AG04450 (cell line): ENCODE measurements at regions of chr3 and their contacts with region 1.

Region 1: DNA sequence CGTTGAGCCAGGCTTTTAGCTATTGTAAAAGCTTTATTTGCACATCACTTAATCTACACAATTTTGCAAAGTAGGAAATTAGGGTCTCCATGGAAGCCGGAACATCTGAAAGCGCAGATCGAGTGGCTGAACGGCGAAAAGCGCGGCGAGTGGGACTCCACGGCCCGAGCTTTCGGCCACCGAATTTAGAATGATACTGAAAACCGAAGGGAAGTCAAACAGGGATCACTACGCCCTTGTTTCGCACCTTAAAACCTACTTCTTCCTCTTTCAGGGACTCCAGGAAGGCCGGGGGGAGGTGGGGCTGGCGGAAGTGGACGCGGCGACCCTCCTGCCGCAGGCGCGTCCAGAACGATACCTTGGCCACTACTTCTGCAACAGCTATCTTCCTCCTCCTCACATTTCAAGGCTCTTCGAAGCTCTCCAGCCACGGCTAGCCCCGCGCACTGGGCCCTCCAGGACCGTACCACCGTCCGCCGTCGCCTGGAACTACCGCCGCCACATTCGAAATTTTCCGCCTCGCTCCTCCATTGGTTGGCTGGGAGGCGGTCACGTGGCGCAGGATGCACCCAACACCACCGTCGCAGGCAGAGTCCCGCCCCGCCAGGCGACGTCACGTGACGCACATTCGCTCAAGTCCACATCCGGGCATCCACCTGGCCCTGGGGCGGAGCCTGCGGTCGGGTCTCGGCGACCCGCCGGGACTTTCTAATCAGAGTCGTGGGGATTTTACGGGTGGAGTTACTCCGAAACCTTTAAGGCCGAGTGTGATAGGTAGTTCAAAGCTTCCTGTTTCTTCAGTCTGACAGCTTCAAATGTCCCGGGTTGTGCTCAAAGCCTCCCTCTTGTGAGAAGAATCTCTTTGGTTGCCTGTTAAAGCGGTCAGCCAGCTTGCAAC is at the start of gene SGO1:
- DNase-seq: peak; percentile 90
- H3K4me3 ChIP-seq: peak within 1 kb of the TSS; percentile 97
- H3K27ac ChIP-seq: peak within 1 kb of the TSS; percentile 92
- H3K27me3 ChIP-seq: no peaks in the 10 kb centered on the region
- CTCF ChIP-seq: 0 out of 2 replicates have a peak, but pooled peaks have one; percentile 13
- polyA plus RNA-seq, gene SGO1: 1.3 and 2.2 TPM in 2 replicates

Region 2: DNA sequence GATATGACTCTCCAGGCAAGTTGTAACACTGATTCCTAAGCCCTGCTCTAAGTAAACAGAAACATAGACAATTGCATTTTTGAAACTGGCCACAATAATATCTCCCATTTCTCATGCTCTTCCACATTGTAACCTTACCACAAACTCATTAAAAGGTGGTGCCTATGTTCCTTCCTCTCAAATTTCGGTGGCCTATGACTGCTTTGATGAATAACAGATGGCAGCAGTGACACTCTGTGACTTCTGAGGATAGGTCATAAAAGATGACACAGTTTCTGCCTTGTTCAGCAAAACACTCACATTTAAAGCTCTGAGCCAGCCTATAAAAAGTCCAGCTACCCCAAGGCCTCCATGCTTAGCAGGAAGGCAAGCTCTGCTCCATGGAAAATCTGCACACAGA is 447.1 kb before region 1 on chr3:
- CTCF ChIA-PET with region 1: no interaction called
- POLR2A ChIA-PET with region 1: no interaction called
- DNase-seq: no peak
- H3K4me3 ChIP-seq: no peak overlapping the region
- H3K27ac ChIP-seq: no peak overlapping the region
- H3K27me3 ChIP-seq: no peaks in the 10 kb centered on the region
- CTCF ChIP-seq: no peak

Region 3: GRCh38 chr3:20079621-20080020 is 106.3 kb before region 1 on chr3:
- CTCF ChIA-PET with region 1: no interaction called
- POLR2A ChIA-PET with region 1: interaction called, 15 read pairs
- DNase-seq: no peak
- H3K4me3 ChIP-seq: no peak overlapping the region
- H3K27ac ChIP-seq: no peak overlapping the region
- H3K27me3 ChIP-seq: no peaks in the 10 kb centered on the region
- CTCF ChIP-seq: no peak

Region 4: DNA sequence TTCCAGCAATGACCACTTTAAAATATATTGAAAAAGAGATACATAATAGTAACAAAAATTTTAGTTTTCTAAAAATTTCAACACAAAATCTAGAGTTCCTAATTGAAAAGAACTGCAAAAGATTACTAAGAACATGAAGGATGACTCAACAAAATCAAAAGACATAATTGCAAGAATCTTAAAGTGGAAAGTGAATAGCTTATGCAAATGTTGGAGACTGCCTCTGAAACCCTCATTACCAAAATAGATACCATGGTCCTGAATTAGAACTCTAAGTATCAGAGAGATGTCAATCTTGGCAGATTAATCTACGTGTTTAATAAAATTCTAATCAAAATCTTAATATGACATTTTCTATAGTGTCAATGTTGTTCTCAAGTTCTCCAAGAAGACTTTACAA is 60.7 kb after region 1 on chr3:
- CTCF ChIA-PET with region 1: no interaction called
- POLR2A ChIA-PET with region 1: no interaction called
- DNase-seq: no peak
- H3K4me3 ChIP-seq: no peak overlapping the region
- H3K27ac ChIP-seq: no peak overlapping the region
- H3K27me3 ChIP-seq: no peaks in the 10 kb centered on the region
- CTCF ChIP-seq: no peak